ENCODE measurements at regions of chr3 and their contacts with region 1.

Region 1: DNA sequence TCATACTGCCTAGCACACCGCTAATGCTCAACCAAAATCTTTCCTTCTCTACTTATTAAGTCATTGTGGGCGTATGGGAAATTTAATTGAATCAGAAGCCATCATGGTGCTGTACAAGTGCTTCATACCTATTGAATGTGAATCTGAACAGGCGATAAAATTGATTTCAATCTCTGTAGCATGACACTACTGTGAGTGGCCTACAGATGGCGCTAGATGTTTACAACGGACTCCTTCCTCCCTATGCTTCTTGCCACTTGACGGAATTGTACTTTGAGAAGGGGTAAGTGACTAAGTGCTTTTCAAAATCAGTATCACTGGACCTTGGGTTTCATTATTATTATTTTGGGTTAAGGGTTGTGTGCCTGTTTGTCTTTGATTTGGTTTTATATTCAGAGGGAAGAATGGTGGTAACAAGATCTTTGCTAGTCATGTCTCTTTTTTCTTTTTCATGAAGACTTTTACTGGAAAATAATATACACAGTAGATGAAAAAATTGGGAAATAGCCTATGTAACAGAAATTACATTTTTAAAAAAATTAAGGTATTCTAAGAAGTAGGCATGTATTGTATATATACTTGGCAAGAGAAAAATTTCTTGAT is 35.4 kb downstream of the ACP3 start:
- DNase-seq: peak; percentile 67 to 73
- H3K4me3 ChIP-seq: no peak overlapping the region
- H3K27ac ChIP-seq: no peak overlapping the region
- H3K4me1 ChIP-seq: no peaks in the 10 kb centered on the region
- H3K27me3 ChIP-seq: no peaks in the 10 kb centered on the region
- CTCF ChIP-seq: peak; percentile 81 to 89

Region 2: DNA sequence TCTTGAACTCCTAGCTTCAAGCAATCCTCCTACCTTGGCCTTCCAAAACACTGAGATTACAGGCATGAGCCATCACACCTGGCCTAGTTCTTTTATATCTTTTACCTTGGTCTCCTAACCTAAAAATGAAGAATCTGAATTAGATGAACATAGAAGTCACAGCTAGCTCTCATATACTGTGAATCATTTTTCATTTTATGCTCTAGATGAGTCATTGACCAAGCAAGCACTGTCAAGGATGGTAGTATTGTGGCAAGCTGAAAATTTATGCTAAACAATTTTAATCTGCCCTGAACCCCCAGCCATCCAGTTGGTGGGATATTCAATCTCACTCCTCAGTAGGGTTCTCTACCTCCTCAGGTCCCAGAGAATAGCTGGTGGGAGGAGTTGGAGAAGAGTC is 16.3 kb after region 1 on chr3:
- intact Hi-C with region 1: no loop called
- DNase-seq: no peak
- H3K4me3 ChIP-seq: no peak overlapping the region
- H3K27ac ChIP-seq: no peak overlapping the region
- H3K4me1 ChIP-seq: no peaks in the 10 kb centered on the region
- H3K27me3 ChIP-seq: no peaks in the 10 kb centered on the region
- CTCF ChIP-seq: no peak

Region 3: DNA sequence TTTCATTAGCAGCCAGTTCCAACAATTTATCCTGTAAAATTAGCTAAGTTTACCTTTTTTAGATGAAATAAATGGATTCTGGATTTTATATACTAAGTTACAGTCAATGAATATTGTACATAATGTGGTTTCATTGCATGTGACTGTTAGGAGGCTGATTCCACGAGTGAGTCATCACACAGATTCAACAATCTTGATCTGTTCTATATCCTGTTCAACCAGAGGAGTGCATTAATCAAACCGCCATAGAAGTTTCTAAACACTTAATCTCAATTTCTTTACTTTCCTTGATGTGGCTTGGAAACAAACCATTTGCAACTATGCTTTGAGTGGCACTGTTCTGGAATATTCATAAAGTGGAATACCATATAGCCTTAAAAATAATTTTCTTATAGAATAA is 80.0 kb after region 1 on chr3:
- intact Hi-C with region 1: no loop called
- DNase-seq: no peak
- H3K4me3 ChIP-seq: no peak overlapping the region
- H3K27ac ChIP-seq: no peak overlapping the region
- H3K4me1 ChIP-seq: peaks cover 0 to 14% (median 2%) of the 10 kb centered on the region in 4 donors
- H3K27me3 ChIP-seq: no peaks in the 10 kb centered on the region
- CTCF ChIP-seq: no peak

Region 4: DNA sequence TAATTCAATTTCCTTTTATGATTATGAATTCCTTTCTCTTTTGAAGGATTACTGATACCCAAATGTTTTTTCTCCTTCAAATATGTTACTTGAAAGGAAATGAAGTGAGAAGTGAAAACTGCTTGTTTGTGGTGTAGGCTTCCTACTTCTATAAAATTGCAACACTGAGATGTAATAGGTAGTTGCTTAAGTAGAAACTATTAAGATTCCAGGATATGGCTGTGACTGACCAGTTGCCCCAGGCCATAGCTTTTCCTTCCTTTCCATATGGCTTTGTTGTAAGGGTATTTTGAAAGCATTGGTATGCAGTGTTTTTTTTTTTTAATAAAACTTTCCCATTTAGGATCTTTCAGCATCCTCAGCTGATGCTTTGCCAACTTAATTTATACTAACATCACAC is 93.2 kb after region 1 on chr3:
- intact Hi-C with region 1: loop called (anchors 10 kb)
- DNase-seq: no peak
- H3K4me3 ChIP-seq: no peak overlapping the region
- H3K27ac ChIP-seq: peak overlapping the region in 1 of 2 donors; percentile 2
- H3K4me1 ChIP-seq: peaks cover 0 to 60% (median 27%) of the 10 kb centered on the region in 4 donors
- H3K27me3 ChIP-seq: no peaks in the 10 kb centered on the region
- CTCF ChIP-seq: no peak